ENCODE measurements at regions of chr17 and their contacts with region 1.

Region 1: GRCh38 chr17:80991645-80992076 is at the start of gene CHMP6:
- DNase-seq: peak; percentile 66
- H3K4me3 ChIP-seq: peak within 1 kb of the TSS; percentile 70 to 77 (median 75)
- H3K27ac ChIP-seq: peak within 1 kb of the TSS; percentile 58
- H3K4me1 ChIP-seq: peaks cover 26% of the 10 kb centered on the region
- H3K27me3 ChIP-seq: no peaks in the 10 kb centered on the region
- CTCF ChIP-seq: peak in 1 of 2 donors; percentile 9
- total RNA-seq, gene CHMP6: 12.0 to 28.1 TPM

Region 2: DNA sequence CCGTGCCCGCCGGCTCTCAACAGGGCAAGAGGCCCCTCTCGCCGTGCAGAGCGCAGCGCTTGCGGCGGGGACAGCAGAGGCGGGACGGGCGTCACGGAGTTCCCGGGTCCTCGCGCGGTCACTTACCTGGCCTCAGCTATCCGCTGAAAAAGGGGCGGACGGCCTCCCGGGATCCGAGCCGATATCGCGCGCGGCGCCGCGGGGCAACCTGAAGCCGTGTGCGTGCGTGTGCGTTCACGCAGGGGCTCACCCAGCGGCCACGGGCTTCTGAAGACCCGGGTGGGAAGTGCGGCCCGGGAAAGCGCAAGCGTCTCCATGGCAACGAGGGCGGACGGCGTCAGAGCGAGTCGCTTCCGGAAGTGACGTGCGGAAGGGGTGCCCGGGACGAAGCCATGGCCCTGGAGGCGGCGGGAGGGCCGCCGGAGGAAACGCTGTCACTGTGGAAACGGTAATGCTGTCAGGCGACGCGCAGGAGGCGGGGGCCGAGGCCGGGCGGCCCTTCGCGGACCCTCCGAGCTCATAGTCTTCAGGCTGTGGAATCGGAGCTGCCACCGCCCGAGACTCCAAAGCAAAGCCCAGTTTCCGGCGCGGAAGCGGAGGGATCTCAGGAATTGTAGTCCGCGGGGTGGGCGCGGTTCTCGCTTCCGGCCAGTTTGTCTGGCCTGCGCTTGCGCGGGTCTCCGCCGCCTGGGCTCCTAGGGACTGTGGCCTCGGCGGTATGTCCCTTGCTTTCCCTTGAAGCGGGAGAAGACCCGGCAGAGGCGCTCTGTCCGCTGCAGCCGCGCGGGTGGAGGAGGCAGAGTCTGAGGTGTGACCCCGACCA is 576.6 kb before region 1 on chr17 and contains the start of gene ENDOV:
- CTCF ChIA-PET with region 1: no interaction called
- dilution Hi-C with region 1: no loop called
- in situ Hi-C with region 1: loop called in 1 of 2 experiments (anchors 25 kb)
- intact Hi-C with region 1: no loop called
- DNase-seq: peak; percentile 92
- H3K4me3 ChIP-seq: peak within 1 kb of the TSS; percentile 66 to 90 (median 69)
- H3K27ac ChIP-seq: peak within 1 kb of the TSS; percentile 96
- H3K4me1 ChIP-seq: peaks cover 14% of the 10 kb centered on the region
- H3K27me3 ChIP-seq: no peaks in the 10 kb centered on the region
- CTCF ChIP-seq: no peak
- total RNA-seq, gene ENDOV: 19.5 to 22.6 TPM

Region 3: DNA sequence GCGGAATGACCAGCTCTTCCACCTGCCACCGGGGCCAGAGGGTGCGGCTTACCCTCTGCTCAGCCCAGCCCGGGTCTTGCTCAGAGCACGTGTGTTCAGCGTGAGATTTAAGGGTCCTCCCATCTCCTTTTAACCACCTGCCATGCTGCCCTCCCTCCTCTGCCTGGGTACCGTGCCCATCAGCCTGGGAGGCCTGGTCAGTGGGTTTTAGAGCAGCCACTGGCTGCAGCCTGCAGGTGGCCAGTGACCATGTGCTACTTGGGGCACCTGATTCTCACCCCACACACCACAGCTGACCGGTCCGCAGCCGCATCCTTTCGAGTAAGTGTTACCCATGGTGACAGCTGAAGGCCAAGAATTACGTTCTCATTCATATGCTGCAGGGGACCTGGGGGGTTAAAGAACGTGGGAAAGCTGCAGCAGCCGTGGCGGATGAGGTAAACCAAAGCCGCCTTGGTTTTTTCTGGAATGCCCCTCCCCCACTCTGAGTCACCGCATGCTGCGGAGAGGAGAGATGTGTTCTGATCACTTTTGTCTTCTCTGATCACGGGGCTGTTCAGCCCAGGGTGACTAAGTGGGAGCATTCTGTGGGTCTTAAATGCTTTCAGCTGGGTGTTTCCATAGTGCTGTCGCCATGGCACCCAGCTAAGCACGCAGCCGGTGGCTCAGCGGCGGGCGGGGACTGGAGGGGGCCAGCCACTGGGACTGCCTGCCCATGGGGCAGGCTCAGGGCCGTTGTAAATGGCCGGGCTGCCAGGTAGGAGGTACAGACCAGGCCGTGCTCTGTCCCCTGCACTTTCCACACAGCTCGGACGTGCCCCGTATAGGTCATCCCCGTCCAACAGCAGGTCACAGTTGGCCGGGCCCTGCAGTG is 103.1 kb after region 1 on chr17:
- CTCF ChIA-PET with region 1: no interaction called
- dilution Hi-C with region 1: no loop called
- in situ Hi-C with region 1: no loop called
- intact Hi-C with region 1: loop called (anchors 1 kb)
- DNase-seq: peak; percentile 98
- H3K4me3 ChIP-seq: no peak overlapping the region
- H3K27ac ChIP-seq: peak overlapping the region; percentile 80
- H3K4me1 ChIP-seq: peaks cover 76% of the 10 kb centered on the region
- H3K27me3 ChIP-seq: no peaks in the 10 kb centered on the region
- CTCF ChIP-seq: peak in 1 of 2 donors; percentile 1

Region 4: DNA sequence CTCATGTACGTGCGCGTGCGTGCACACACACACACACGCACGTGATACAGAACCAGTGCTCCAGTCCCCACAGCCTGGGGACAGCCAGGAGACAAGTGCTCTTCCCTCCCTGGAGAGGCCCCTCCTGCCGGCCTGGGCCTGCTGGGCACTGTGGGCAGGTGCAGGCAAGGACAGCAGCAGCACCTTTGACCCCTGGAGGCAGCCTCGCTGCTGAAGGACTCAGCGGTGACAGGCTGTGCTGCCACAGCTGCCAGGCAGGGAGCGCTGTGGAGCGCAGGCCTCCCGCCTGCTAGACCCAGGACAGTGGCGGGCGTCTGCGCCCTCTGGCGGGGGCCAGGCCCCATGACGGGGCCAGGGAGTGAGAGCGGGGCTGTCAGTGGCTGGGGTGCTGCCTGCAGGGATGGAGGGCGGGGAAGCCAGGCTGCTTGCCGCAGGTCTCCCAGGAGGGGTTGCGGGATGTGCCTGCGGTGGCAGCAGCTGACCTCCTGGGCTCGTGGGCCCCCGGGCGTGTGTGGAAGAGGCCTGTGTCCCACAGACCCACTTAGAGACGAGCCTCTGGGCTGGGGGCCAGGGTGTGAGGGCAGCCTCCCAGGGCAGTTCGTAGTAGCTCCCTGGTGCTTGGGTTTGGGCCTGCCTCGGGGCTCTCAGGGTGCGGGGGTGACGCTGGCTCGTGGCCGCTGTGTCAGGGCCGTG is 110.1 kb after region 1 on chr17:
- CTCF ChIA-PET with region 1: no interaction called
- dilution Hi-C with region 1: no loop called
- in situ Hi-C with region 1: no loop called
- intact Hi-C with region 1: loop called (anchors 1 kb)
- DNase-seq: peak; percentile 63
- H3K4me3 ChIP-seq: no peak overlapping the region
- H3K27ac ChIP-seq: no peak overlapping the region
- H3K4me1 ChIP-seq: peaks cover 20% of the 10 kb centered on the region
- H3K27me3 ChIP-seq: no peaks in the 10 kb centered on the region
- CTCF ChIP-seq: peak; percentile 99 to 100

Region 5: DNA sequence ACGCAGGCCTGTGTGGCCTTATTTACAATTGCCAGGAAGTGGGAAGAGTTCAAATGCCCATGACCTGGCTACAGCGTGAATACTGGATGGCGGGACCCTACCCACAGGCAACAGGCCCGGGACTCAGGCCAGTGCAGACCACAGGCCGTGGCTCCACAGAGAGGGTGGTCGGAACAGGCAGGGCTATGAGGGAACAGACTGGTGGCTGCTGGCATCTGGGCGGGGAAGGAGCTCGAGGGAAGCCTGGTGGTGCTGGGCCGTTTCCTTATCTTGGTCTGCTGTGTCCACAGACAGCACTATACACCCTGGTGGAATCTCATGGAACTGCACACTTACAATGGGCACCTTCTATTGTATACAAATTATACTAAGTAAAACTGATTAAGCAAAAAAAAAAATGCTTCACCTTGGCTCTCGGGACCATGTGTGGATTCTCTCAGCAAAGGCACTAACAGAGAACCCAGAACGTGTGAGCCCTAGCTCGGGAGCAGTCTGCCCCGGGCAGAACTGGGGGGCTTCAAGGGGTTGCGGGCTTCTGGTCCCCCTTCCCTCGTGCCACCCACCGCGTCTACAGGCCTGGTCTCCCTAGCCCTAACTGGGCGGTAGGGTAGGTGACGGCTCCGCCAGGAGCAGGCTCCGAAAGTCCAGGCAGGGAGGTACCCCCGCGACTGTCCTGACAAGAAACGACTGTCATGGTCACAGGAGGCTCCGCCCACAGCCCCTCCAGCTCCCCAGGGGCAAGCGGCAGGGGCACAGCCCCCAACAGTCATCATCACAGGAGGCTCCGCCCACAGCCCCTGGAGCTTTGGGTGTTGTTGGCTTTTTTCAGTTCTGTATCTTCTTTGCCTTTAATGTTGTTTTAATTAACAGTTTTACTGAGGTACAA is 209.3 kb after region 1 on chr17:
- CTCF ChIA-PET with region 1: no interaction called
- dilution Hi-C with region 1: no loop called
- in situ Hi-C with region 1: no loop called
- intact Hi-C with region 1: loop called (anchors 2 kb)
- DNase-seq: peak; percentile 54
- H3K4me3 ChIP-seq: no peak overlapping the region
- H3K27ac ChIP-seq: no peak overlapping the region
- H3K4me1 ChIP-seq: peaks cover 15% of the 10 kb centered on the region
- H3K27me3 ChIP-seq: no peaks in the 10 kb centered on the region
- CTCF ChIP-seq: peak; percentile 63 to 75

Region 6: GRCh38 chr17:81238817-81239600 is 247.3 kb after region 1 on chr17 and contains the starts of genes NDUFAF8 and TEPSIN:
- CTCF ChIA-PET with region 1: no interaction called
- dilution Hi-C with region 1: no loop called
- in situ Hi-C with region 1: no loop called
- intact Hi-C with region 1: loop called (anchors 2 kb)
- DNase-seq: peak; percentile 100
- H3K4me3 ChIP-seq: peak within 1 kb of the TSS; percentile 71 to 94 (median 91)
- H3K27ac ChIP-seq: peak within 1 kb of the TSS; percentile 75
- H3K4me1 ChIP-seq: peaks cover 19% of the 10 kb centered on the region
- H3K27me3 ChIP-seq: no peaks in the 10 kb centered on the region
- CTCF ChIP-seq: no peak
- total RNA-seq, gene NDUFAF8: 14.7 to 98.1 TPM
- total RNA-seq, gene TEPSIN: 15.7 to 25.7 TPM

Measured in mammary epithelial cell (primary cell).